Ascending aorta (tissue), 2 donors: ENCODE measurements at regions of chr16 and their contacts with region 1.

Region 1: GRCh38 chr16:19502395-19503131 is 19.3 kb downstream of the GDE1 start:
- DNase-seq: peak in 1 of 2 donors; percentile 65
- H3K4me3 ChIP-seq: no peak overlapping the region
- H3K27ac ChIP-seq: no peak overlapping the region
- H3K4me1 ChIP-seq: no peaks in the 10 kb centered on the region
- H3K27me3 ChIP-seq: no peaks in the 10 kb centered on the region
- CTCF ChIP-seq: peak; percentile 40 to 72 (median 59)

Region 2: DNA sequence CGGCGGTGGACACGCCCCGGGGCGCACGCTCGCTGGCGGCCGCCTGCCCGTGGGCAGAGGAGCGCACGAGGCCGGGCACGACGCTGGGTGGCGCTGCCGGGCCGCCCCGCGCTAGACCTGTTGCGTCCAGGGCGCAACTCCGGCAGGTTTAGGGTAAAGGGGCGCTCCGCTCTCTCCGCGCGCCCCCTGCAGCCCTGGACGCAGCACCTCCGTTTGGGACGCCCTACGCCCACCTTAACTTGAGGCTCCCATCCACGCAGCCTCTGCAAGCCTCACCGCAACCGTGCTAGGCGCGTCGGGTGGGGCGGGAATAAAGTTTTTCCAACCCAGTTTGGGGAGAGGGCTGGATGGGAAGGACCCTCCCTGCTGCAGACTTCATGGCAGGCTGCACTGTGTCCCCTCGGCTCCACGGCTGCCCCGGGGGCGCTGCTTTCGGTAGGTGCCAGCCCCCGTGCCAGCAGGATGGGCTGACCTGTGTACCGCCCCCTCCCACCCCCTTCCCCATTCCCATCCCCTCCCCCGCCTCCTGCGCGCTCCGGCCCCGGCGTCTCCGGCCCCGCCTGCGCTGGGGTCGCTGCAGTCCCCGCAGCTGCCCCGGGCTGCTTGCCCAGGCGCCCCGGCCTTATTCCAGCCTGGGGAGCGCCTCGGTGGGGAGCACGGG is 334.7 kb before region 1 on chr16 and contains the start of gene SYT17:
- intact Hi-C with region 1: loop called (anchors 10 kb)
- DNase-seq: peak in 1 of 2 donors; percentile 75
- H3K4me3 ChIP-seq: peak within 1 kb of the TSS; percentile 52 to 72
- H3K27ac ChIP-seq: peak within 1 kb of the TSS in 1 of 2 donors; percentile 10
- H3K4me1 ChIP-seq: peaks cover 3 to 4% of the 10 kb centered on the region in 2 donors
- H3K27me3 ChIP-seq: no peaks in the 10 kb centered on the region
- CTCF ChIP-seq: peak; percentile 42 to 82 (median 55)
- total RNA-seq, gene SYT17: 2.4 TPM

Region 3: GRCh38 chr16:19316846-19317245 is 185.7 kb before region 1 on chr16:
- intact Hi-C with region 1: no loop called
- DNase-seq: no peak
- H3K4me3 ChIP-seq: no peak overlapping the region
- H3K27ac ChIP-seq: no peak overlapping the region
- H3K4me1 ChIP-seq: no peaks in the 10 kb centered on the region
- H3K27me3 ChIP-seq: no peaks in the 10 kb centered on the region
- CTCF ChIP-seq: no peak

Region 4: GRCh38 chr16:19601083-19601976 is 98.8 kb after region 1 on chr16:
- intact Hi-C with region 1: no loop called
- DNase-seq: no peak
- H3K4me3 ChIP-seq: no peak overlapping the region
- H3K27ac ChIP-seq: no peak overlapping the region
- H3K4me1 ChIP-seq: no peaks in the 10 kb centered on the region
- H3K27me3 ChIP-seq: no peaks in the 10 kb centered on the region
- CTCF ChIP-seq: peak; percentile 39 to 65 (median 50)